ENCODE measurements at regions of chr22 and their contacts with region 1.

Region 1: GRCh38 chr22:23767673-23768548 is at the start of gene CHCHD10:
- DNase-seq: peak; percentile 70 to 76 (median 73)
- H3K4me3 ChIP-seq: peak within 1 kb of the TSS; percentile 65 to 82
- H3K4me3 Mint-ChIP-seq: peak within 1 kb of the TSS; percentile 77 to 90 (median 84)
- H3K27ac ChIP-seq: peak within 1 kb of the TSS; percentile 63
- H3K27ac Mint-ChIP-seq: peak within 1 kb of the TSS in 6 of 7 donors; percentile 9 to 88 (median 49)
- H3K4me1 ChIP-seq: peaks cover 44% of the 10 kb centered on the region
- H3K4me1 Mint-ChIP-seq: peaks cover 7 to 45% (median 28%) of the 10 kb centered on the region in 4 donors
- H3K27me3 ChIP-seq: no peaks in the 10 kb centered on the region
- H3K27me3 Mint-ChIP-seq: no peaks in the 10 kb centered on the region
- total RNA-seq, gene CHCHD10: 44.7 to 45.9 TPM

Region 2: GRCh38 chr22:23750714-23751440 is 17.0 kb before region 1 on chr22 and contains the start of gene ZNF70:
- CTCF ChIA-PET with region 1: interaction called, 7 read pairs
- POLR2A ChIA-PET with region 1: interaction called, 9 read pairs
- intact Hi-C with region 1: loop called (anchors 1 kb)
- DNase-seq: peak; percentile 83 to 88 (median 86)
- H3K4me3 ChIP-seq: peak within 1 kb of the TSS; percentile 73 to 82
- H3K4me3 Mint-ChIP-seq: peak within 1 kb of the TSS; percentile 76 to 85 (median 80)
- H3K27ac ChIP-seq: peak within 1 kb of the TSS; percentile 67
- H3K27ac Mint-ChIP-seq: peak within 1 kb of the TSS; percentile 69 to 87 (median 78)
- H3K4me1 ChIP-seq: peaks cover 13% of the 10 kb centered on the region
- H3K4me1 Mint-ChIP-seq: peaks cover 7 to 21% (median 12%) of the 10 kb centered on the region in 4 donors
- H3K27me3 ChIP-seq: no peaks in the 10 kb centered on the region
- H3K27me3 Mint-ChIP-seq: no peaks in the 10 kb centered on the region
- total RNA-seq, gene ZNF70: 6.4 to 7.4 TPM

Region 3: GRCh38 chr22:23816156-23816976 is 48.5 kb after region 1 on chr22:
- CTCF ChIA-PET with region 1: no interaction called
- POLR2A ChIA-PET with region 1: no interaction called
- intact Hi-C with region 1: no loop called
- DNase-seq: no peak
- H3K4me3 ChIP-seq: no peak overlapping the region
- H3K4me3 Mint-ChIP-seq: no peak overlapping the region
- H3K27ac ChIP-seq: no peak overlapping the region
- H3K27ac Mint-ChIP-seq: no peak overlapping the region
- H3K4me1 ChIP-seq: no peaks in the 10 kb centered on the region
- H3K4me1 Mint-ChIP-seq: peaks cover 0 to 3% (median 0%) of the 10 kb centered on the region in 4 donors
- H3K27me3 ChIP-seq: no peaks in the 10 kb centered on the region
- H3K27me3 Mint-ChIP-seq: no peaks in the 10 kb centered on the region

Region 4: DNA sequence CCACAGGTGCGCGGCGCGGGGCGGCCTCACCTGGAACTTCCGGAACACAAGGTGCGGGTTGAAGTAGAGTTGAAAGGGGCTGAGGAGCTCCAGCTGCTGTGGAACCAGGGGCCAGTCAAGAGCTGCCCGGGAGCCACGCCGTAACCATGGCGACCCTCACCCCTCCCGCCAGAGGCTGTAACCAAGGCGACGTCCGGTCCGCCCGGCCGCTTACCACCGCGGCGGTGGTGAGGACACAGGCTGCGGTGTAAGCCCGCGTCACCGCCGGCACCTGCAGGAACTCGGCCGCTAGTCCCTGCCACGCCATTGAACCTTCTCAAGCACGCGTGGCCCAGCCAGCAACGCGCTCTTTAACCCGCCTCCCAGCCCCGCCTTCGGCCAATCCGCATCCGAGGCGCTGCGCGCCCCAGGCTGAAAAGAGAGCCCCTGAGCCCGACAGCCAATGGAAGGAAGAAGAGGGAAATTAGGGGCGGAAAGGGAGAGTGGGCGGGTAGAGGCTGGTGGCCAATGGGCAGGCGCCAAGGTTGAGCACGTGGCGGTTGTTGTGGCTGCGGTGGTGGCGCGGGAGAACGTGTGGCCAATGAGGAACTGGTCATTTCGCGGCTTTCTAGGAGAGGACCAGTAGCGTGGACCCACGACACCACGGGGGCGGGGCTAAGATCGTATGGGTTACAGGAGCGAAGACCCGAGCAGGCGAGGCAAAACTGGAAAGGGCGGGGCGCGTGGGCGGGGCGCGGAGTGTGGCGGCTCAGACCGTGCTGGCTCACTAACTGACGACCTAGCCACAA is 71.0 kb after region 1 on chr22 and contains the start of gene DERL3:
- CTCF ChIA-PET with region 1: interaction called, 3 read pairs
- POLR2A ChIA-PET with region 1: interaction called, 3 read pairs
- intact Hi-C with region 1: loop called (anchors 2 kb)
- DNase-seq: peak; percentile 93 to 96 (median 95)
- H3K4me3 ChIP-seq: peak within 1 kb of the TSS in 1 of 2 donors; percentile 83
- H3K4me3 Mint-ChIP-seq: peak within 1 kb of the TSS; percentile 85 to 96 (median 91)
- H3K27ac ChIP-seq: peak within 1 kb of the TSS; percentile 24
- H3K27ac Mint-ChIP-seq: peak within 1 kb of the TSS; percentile 83 to 97 (median 93)
- H3K4me1 ChIP-seq: peaks cover 14% of the 10 kb centered on the region
- H3K4me1 Mint-ChIP-seq: peaks cover 14 to 30% (median 20%) of the 10 kb centered on the region in 4 donors
- H3K27me3 ChIP-seq: no peaks in the 10 kb centered on the region
- H3K27me3 Mint-ChIP-seq: no peaks in the 10 kb centered on the region
- total RNA-seq, gene DERL3: 1.9 to 2.9 TPM

Measured in CD4-positive, alpha-beta memory T cell (primary cell).